HepG2 (cell line): ENCODE measurements at regions of chr6 and their contacts with region 1.

Region 1: GRCh38 chr6:29964887-29965562 is 22.7 kb downstream of the HLA-A start:
- DNase-seq: peak; percentile 94
- ATAC-seq: peak; percentile 92
- H3K4me3 ChIP-seq: peak overlapping the region; percentile 75 to 84 (median 77)
- H3K27ac ChIP-seq: peak overlapping the region; percentile 84
- H3K4me1 ChIP-seq: peaks cover 38% of the 10 kb centered on the region
- H3K27me3 ChIP-seq: no peaks in the 10 kb centered on the region; a peak in 1 of 5 replicates
- CTCF ChIP-seq: peak; percentile 7; the same call in 1 of the 2 replicates
- EP300 ChIP-seq: peak in 1 of 2 experiments; percentile 85; a peak in 2 of 4 replicates
- POLR2A ChIP-seq: peak; percentile 73 to 74
- RAD21 ChIP-seq: no peak

Region 2: DNA sequence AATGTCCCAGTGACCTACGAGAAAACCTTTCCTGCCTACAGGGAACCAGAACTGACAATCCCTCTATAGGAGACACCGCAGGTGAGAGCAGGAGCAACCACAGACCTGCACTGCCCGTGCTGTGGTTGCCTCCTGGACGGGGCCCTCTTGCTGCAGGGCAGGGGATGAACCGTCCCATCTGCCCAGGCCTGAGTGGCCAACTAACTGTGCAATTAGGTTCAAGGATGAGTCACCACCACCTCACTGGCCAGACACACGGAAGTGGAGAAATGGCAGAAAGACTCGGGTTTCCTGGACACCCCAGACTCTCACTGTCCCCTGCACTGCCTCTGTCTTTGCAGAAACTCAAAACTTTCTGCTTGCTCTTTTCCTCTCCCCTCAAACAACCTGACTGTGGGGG is 151.2 kb before region 1 on chr6:
- CTCF ChIA-PET with region 1: no interaction called
- POLR2A ChIA-PET with region 1: no interaction called
- in situ Hi-C with region 1: no loop called
- intact Hi-C with region 1: no loop called
- DNase-seq: peak; percentile 17
- ATAC-seq: peak; percentile 80
- H3K4me3 ChIP-seq: no peak overlapping the region
- H3K27ac ChIP-seq: no peak overlapping the region
- H3K4me1 ChIP-seq: peaks cover 14% of the 10 kb centered on the region; the same call in 1 of the 2 replicates
- H3K27me3 ChIP-seq: peaks cover 1 to 3% of the 10 kb centered on the region in 2 experiments; a peak in 2 of 5 replicates
- CTCF ChIP-seq: no peak
- EP300 ChIP-seq: no peak
- POLR2A ChIP-seq: no peak
- RAD21 ChIP-seq: no peak

Region 3: DNA sequence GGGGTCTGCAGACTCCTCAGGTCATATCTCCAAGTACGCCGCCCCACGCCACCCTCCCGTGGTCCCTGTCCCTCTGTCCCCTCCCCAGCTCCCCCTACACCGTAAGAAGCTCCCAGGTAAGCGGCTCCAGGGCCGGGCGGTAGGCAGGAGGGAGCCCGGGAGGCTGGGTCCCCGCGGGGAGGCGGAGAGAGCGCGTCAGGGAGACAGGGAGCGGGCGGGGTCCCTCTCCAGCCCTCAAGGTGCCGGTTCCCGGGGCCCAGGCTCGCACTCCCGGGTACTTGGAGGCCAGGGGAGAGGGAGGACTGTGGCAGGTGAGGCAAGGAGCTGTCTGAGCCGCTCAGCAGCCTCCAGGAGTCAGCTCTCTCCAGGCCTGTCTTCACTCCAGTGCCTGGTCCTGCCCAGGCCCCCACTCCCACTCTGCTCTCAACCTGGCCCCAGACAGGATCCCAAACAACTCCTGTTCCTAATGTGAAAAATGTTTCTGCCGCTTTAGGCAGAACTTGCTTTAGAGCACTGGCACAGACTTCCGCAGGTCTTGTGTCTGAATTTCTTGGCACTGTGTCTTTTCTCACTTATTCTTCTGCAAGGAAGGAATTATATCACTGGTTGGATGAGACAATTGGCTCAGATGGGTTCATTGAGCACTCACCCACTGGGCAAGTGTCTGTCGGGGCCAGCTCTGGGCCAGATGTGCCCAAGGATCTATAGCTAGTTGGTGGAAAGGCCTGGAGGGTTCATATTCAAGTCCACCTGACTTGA is 100.8 kb before region 1 on chr6:
- CTCF ChIA-PET with region 1: no interaction called
- POLR2A ChIA-PET with region 1: no interaction called
- in situ Hi-C with region 1: no loop called
- intact Hi-C with region 1: no loop called
- DNase-seq: no peak
- ATAC-seq: peak; percentile 38; the same call in 1 of the 3 replicates
- H3K4me3 ChIP-seq: no peak overlapping the region
- H3K27ac ChIP-seq: no peak overlapping the region
- H3K4me1 ChIP-seq: no peaks in the 10 kb centered on the region
- H3K27me3 ChIP-seq: peaks cover 4 to 39% of the 10 kb centered on the region in 2 experiments; a peak in 4 of 5 replicates
- CTCF ChIP-seq: no peak
- EP300 ChIP-seq: no peak
- POLR2A ChIP-seq: no peak
- RAD21 ChIP-seq: no peak

Region 4: DNA sequence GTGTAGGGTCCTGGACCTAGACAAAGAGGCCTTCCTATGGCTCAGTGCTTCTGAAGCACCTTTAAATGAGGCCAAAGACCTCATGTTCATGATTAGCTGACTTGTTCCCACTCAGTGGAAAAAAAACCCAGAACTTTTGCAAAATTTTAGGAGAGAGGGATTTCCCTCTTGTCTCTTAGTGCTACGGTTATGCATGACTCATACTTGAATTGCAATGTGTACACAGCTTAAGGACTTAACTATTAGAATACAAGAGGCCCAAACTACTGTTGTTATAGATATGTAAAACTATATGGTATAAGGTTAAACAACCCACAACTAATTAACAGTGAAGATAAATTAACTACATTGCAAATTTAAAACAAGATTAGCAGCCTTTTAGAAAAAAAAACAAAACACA is 55.0 kb before region 1 on chr6:
- CTCF ChIA-PET with region 1: no interaction called
- POLR2A ChIA-PET with region 1: interaction called, 15 read pairs
- in situ Hi-C with region 1: no loop called
- intact Hi-C with region 1: loop called (anchors 5 kb)
- DNase-seq: no peak
- ATAC-seq: no peak
- H3K4me3 ChIP-seq: no peak overlapping the region
- H3K27ac ChIP-seq: no peak overlapping the region
- H3K4me1 ChIP-seq: peaks cover 79% of the 10 kb centered on the region
- H3K27me3 ChIP-seq: no peaks in the 10 kb centered on the region
- CTCF ChIP-seq: no peak
- EP300 ChIP-seq: no peak
- POLR2A ChIP-seq: no peak
- RAD21 ChIP-seq: no peak

Region 5: GRCh38 chr6:29976588-29977424 is 11.8 kb after region 1 on chr6:
- CTCF ChIA-PET with region 1: no interaction called
- POLR2A ChIA-PET with region 1: interaction called, 76 read pairs
- in situ Hi-C with region 1: no loop called
- intact Hi-C with region 1: loop called (anchors 1 kb)
- DNase-seq: peak; percentile 77
- ATAC-seq: peak; percentile 93
- H3K4me3 ChIP-seq: peak overlapping the region; percentile 54 to 76 (median 65)
- H3K27ac ChIP-seq: peak overlapping the region; percentile 76
- H3K4me1 ChIP-seq: peaks cover 40% of the 10 kb centered on the region
- H3K27me3 ChIP-seq: no peaks in the 10 kb centered on the region
- CTCF ChIP-seq: peak; percentile 60
- EP300 ChIP-seq: 0 out of 4 replicates have a peak, but pooled peaks of 1 of the 2 experiments have one; percentile 19
- POLR2A ChIP-seq: peak; percentile 57 to 64; a peak in 3 of 4 replicates
- RAD21 ChIP-seq: peak; percentile 60

Region 6: GRCh38 chr6:29995340-29995777 is 30.3 kb after region 1 on chr6:
- CTCF ChIA-PET with region 1: no interaction called
- POLR2A ChIA-PET with region 1: no interaction called
- in situ Hi-C with region 1: no loop called
- intact Hi-C with region 1: no loop called
- DNase-seq: no peak
- ATAC-seq: no peak; the same call in 2 of the 3 replicates
- H3K4me3 ChIP-seq: no peak overlapping the region
- H3K27ac ChIP-seq: no peak overlapping the region
- H3K4me1 ChIP-seq: no peaks in the 10 kb centered on the region
- H3K27me3 ChIP-seq: no peaks in the 10 kb centered on the region; a peak in 1 of 5 replicates
- CTCF ChIP-seq: no peak
- EP300 ChIP-seq: no peak
- POLR2A ChIP-seq: no peak
- RAD21 ChIP-seq: no peak

Region 7: GRCh38 chr6:30013291-30013922 is 48.4 kb after region 1 on chr6:
- CTCF ChIA-PET with region 1: no interaction called
- POLR2A ChIA-PET with region 1: no interaction called
- in situ Hi-C with region 1: no loop called
- intact Hi-C with region 1: loop called (anchors 1 kb)
- DNase-seq: peak; percentile 17
- ATAC-seq: peak; percentile 85
- H3K4me3 ChIP-seq: no peak overlapping the region
- H3K27ac ChIP-seq: no peak overlapping the region
- H3K4me1 ChIP-seq: no peaks in the 10 kb centered on the region
- H3K27me3 ChIP-seq: no peaks in the 10 kb centered on the region
- CTCF ChIP-seq: peak; percentile 77
- EP300 ChIP-seq: no peak
- POLR2A ChIP-seq: no peak
- RAD21 ChIP-seq: peak; percentile 54

Region 8: GRCh38 chr6:30037182-30037788 is 72.3 kb after region 1 on chr6:
- CTCF ChIA-PET with region 1: no interaction called
- POLR2A ChIA-PET with region 1: no interaction called
- in situ Hi-C with region 1: no loop called
- intact Hi-C with region 1: no loop called
- DNase-seq: peak; percentile 38
- ATAC-seq: peak; percentile 87
- H3K4me3 ChIP-seq: no peak overlapping the region
- H3K27ac ChIP-seq: no peak overlapping the region
- H3K4me1 ChIP-seq: peaks cover 6% of the 10 kb centered on the region
- H3K27me3 ChIP-seq: no peaks in the 10 kb centered on the region
- CTCF ChIP-seq: peak; percentile 69
- EP300 ChIP-seq: no peak
- POLR2A ChIP-seq: no peak
- RAD21 ChIP-seq: 0 out of 2 replicates have a peak, but pooled peaks have one; percentile 14